Gastrocnemius medialis (tissue), 4 donors: ENCODE measurements at regions of chr3 and their contacts with region 1.

Region 1: GRCh38 chr3:46923559-46924350 is 46.2 kb downstream of the PTH1R start:
- DNase-seq: peak in 1 of 2 donors; percentile 40
- ATAC-seq: peak in 1 of 2 donors; percentile 32
- H3K4me3 ChIP-seq: no peak overlapping the region
- H3K27ac ChIP-seq: peak overlapping the region in 2 of 4 donors; percentile 92 to 96
- H3K4me1 ChIP-seq: peaks cover 45 to 50% of the 10 kb centered on the region in 2 donors
- H3K27me3 ChIP-seq: no peaks in the 10 kb centered on the region
- CTCF ChIP-seq: peak; percentile 56 to 82 (median 71)
- POLR2A ChIP-seq: no peak

Region 2: DNA sequence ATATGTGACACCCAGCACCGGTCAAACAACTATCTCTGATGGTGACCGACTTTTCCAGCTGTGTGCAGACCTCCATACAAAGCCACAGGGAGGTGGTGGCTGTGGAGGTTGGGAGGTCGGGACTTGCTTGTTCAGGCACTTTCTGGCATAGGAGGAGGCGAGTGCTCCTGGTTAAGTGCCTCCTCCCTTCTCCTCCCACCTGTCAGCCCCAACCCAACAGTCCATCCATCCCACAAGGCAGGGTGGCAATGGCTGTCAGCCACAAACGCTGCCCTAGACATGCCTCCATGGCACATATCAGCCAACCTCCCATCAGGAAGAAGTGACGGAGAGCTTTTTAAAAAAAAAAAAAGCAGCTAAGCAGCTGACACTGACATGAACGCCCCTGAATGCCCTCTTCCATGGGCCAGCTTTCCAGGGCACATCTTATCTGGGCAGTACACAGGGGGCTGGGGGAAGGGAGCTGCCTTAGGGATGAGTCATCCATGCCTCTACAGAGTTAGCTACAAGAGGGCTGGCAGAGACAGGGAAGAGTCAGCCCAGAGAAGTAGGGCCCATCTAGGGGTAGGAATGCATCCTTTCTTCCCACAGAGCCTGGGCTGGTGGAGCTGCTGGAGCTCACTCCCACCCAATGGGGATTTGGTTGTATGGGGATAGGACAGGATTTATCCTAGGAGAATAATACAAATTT is 11.6 kb after region 1 on chr3:
- in situ Hi-C with region 1: no loop called
- intact Hi-C with region 1: loop called (anchors 1 kb)
- DNase-seq: peak; percentile 94 to 99
- ATAC-seq: peak; percentile 92 to 94
- H3K4me3 ChIP-seq: no peak overlapping the region
- H3K27ac ChIP-seq: peak overlapping the region; percentile 90 to 96 (median 92)
- H3K4me1 ChIP-seq: peaks cover 89 to 90% of the 10 kb centered on the region in 2 donors
- H3K27me3 ChIP-seq: no peaks in the 10 kb centered on the region
- CTCF ChIP-seq: peak; percentile 63 to 88 (median 69)
- POLR2A ChIP-seq: peak; percentile 14 to 41

Region 3: DNA sequence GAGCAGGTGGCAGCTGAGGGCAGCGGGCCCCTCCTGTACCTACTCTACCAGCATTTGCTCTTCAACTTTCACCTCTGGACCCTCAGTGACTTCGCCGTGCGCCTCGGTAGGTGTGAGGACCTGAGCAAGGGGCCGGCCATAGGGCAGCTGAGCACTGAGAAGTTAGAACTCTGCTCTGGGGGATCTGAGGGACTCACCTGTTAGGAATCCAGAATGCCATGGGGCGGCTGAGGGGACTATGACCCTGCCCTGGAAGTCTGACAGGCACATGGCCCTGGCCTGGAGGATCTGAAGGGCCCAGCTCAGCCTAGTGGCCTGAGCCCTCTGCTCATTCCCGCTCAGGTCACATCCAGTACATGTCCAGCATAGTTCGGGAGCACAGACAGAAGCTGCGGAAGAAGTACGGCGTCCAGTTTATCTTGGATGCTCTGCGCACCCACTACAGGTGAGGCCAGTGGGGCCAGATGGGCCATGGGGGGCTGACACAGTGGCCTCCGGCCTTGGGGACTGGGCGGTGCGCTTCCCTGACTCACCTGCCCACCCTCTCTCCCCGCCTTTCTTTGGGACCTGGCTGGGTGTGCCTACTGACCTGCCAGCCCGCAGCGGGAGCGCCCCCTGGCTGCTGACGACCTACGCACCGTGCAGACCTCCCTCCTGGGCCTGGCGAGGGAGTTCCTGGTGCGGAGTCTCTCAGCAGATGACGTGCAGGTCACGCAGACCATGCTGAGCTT is 74.5 kb after region 1 on chr3:
- in situ Hi-C with region 1: no loop called
- intact Hi-C with region 1: loop called (anchors 1 kb)
- DNase-seq: peak; percentile 38 to 70
- ATAC-seq: peak in 1 of 2 donors; percentile 82
- H3K4me3 ChIP-seq: no peak overlapping the region
- H3K27ac ChIP-seq: no peak overlapping the region
- H3K4me1 ChIP-seq: no peaks in the 10 kb centered on the region
- H3K27me3 ChIP-seq: no peaks in the 10 kb centered on the region
- CTCF ChIP-seq: peak; percentile 71 to 92 (median 89)
- POLR2A ChIP-seq: no peak

Region 4: GRCh38 chr3:47324278-47324865 is 400.6 kb after region 1 on chr3:
- in situ Hi-C with region 1: no loop called
- intact Hi-C with region 1: loop called (anchors 10 kb)
- DNase-seq: peak; percentile 16 to 42
- ATAC-seq: peak; percentile 94 to 99
- H3K4me3 ChIP-seq: no peak overlapping the region
- H3K27ac ChIP-seq: no peak overlapping the region
- H3K4me1 ChIP-seq: no peaks in the 10 kb centered on the region
- H3K27me3 ChIP-seq: no peaks in the 10 kb centered on the region
- CTCF ChIP-seq: peak; percentile 36 to 77 (median 64)
- POLR2A ChIP-seq: no peak